ENCODE measurements at regions of chr17 and their contacts with region 1.

Region 1: GRCh38 chr17:5584383-5585286 is at the start of gene NLRP1:
- H3K4me3 Mint-ChIP-seq: peak within 1 kb of the TSS; percentile 98
- H3K27ac Mint-ChIP-seq: peak within 1 kb of the TSS; percentile 97
- H3K4me1 Mint-ChIP-seq: peaks cover 77% of the 10 kb centered on the region
- H3K27me3 Mint-ChIP-seq: peaks cover 13% of the 10 kb centered on the region

Region 2: GRCh38 chr17:5619088-5619740 is 34.6 kb after region 1 on chr17:
- intact Hi-C with region 1: no loop called
- H3K4me3 Mint-ChIP-seq: no peak overlapping the region
- H3K27ac Mint-ChIP-seq: no peak overlapping the region
- H3K4me1 Mint-ChIP-seq: peaks cover 15% of the 10 kb centered on the region
- H3K27me3 Mint-ChIP-seq: peaks cover 38% of the 10 kb centered on the region

Region 3: GRCh38 chr17:5706577-5707216 is 122.1 kb after region 1 on chr17:
- intact Hi-C with region 1: loop called (anchors 1 kb)
- H3K4me3 Mint-ChIP-seq: no peak overlapping the region
- H3K27ac Mint-ChIP-seq: no peak overlapping the region
- H3K4me1 Mint-ChIP-seq: no peaks in the 10 kb centered on the region
- H3K27me3 Mint-ChIP-seq: peaks cover 48% of the 10 kb centered on the region

Region 4: DNA sequence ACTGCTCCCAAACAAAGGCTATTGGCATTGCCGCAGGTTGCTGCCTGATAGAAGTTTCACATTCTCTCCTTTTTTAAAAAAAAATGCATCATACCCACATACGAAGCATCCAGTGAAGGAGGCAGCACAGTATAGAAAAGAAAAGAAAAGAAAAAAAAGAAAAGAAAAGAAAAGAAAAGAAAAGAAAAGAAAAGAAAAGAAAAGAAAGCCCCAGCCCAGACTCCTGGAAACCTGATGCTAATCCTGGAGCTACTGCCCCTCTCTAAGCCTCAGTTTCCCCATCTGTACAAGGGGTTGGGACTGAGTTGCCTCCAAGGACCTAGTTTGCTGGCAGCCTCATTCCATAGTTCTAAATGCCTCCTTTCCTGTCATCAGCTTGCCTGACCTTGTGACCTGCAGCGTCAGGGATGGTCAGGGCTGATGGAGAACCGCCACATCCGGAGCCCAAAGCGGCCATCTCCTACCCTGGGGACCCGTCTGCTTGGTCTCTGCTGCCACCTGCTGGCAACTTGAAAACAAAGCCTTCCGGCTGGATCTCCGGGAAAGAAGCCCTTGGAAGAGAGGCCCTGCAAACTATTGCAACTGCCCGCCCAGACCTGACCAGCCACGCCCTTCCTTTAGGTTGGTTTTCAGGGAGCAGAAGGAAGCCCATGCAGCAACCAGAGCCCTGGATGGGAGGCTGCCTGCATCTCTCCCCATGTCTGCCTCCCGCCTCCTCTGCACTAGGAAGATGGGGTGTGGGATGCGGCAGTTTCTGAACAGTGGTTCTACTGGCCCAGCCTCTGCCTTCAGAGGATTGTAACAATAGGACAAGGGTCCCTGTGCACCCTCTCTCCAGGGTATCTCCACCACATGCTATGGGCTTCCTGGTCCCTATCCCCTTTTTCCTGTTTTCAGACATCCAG is 837.3 kb after region 1 on chr17:
- intact Hi-C with region 1: loop called (anchors 1 kb)
- H3K4me3 Mint-ChIP-seq: no peak overlapping the region
- H3K27ac Mint-ChIP-seq: no peak overlapping the region
- H3K4me1 Mint-ChIP-seq: peaks cover 11% of the 10 kb centered on the region
- H3K27me3 Mint-ChIP-seq: peaks cover 68% of the 10 kb centered on the region

Region 5: DNA sequence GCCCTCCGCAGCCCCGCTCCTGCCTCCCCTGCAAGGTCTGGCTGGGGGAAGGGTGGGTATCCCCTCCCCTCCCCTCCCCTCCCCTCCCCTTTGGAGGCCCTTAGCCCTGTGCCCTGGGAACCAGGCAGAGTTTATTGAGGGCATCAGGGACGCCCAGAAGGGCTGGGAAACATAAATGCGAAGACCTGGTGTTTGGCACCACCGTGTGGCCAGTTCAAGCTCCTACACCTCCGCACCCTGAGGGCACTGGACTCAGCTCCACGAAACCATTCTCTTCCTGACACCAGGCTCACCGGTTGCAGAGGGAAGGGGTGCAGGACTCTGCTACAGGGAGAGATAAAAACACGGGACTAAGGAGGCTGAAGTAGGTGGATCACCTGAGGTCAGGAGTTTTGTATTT is 851.3 kb after region 1 on chr17:
- intact Hi-C with region 1: loop called (anchors 5 kb)
- H3K4me3 Mint-ChIP-seq: no peak overlapping the region
- H3K27ac Mint-ChIP-seq: no peak overlapping the region
- H3K4me1 Mint-ChIP-seq: peaks cover 13% of the 10 kb centered on the region
- H3K27me3 Mint-ChIP-seq: peaks cover 83% of the 10 kb centered on the region

Measured in dendritic cell treated with granulocyte-macrophage colony-stimulating factor and Interleukin-4, amounts not matched to agents 40 ng/mL and 50 ng/mL, for 4 days (primary cell).